Activated naive CD4-positive, alpha-beta T cell treated with anti-CD3 and anti-CD28 coated beads for 36 hours (primary cell): ENCODE measurements at regions of chr9 and their contacts with region 1.

Region 1: GRCh38 chr9:93028448-93029006 is 30.0 kb upstream of the SUSD3 start:
- DNase-seq: peak; percentile 90
- H3K4me3 Mint-ChIP-seq: peak overlapping the region; percentile 55
- H3K27ac Mint-ChIP-seq: peak overlapping the region; percentile 97
- H3K4me1 Mint-ChIP-seq: peaks cover 87% of the 10 kb centered on the region
- H3K27me3 Mint-ChIP-seq: no peaks in the 10 kb centered on the region

Region 2: DNA sequence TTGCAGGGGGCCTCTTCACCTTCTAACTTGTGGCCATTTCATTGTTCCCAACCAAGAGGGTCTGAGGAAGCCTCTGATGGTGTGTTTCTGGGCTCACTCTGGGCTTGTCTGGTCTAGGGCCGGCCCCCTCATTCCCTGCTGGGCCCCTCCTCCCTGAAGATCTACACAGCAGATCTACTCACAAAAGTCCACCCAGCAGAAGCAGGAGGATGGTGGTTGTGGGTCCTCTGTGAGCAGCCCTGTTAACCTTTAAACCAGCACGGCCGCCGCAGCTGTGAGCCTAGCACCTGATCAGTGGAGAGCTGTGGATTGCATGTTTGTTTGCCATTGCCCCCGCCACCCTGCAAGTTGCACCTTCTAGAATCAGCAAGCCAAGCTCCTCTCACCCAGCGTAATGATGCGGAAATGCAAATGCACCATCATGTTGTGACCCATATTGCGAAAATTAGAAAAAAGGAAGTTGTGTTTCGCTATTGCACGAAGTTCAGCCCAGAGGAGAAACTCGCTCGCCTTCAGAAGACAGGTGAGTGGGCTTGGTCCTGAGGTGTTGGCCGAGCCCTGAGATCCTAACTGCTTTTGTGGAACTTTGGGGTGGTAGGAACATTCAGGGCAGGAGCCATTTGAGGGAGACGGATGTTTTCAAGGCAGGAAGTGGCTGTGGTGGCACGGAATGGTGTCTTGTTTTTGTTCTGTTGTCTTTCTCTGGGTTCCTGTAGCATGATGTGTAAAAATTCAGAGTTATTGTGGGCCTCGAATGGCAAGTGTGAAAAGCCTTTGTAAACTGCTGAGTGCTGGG is 64.5 kb before region 1 on chr9:
- CTCF ChIA-PET with region 1: no interaction called
- intact Hi-C with region 1: loop called (anchors 1 kb)
- DNase-seq: peak; percentile 86
- H3K4me3 Mint-ChIP-seq: peak overlapping the region; percentile 99
- H3K27ac Mint-ChIP-seq: peak overlapping the region; percentile 100
- H3K4me1 Mint-ChIP-seq: peaks cover 56% of the 10 kb centered on the region
- H3K27me3 Mint-ChIP-seq: no peaks in the 10 kb centered on the region

Region 3: GRCh38 chr9:92986176-92987085 is 42.1 kb before region 1 on chr9:
- CTCF ChIA-PET with region 1: no interaction called
- intact Hi-C with region 1: loop called (anchors 1 kb)
- DNase-seq: peak; percentile 84
- H3K4me3 Mint-ChIP-seq: no peak overlapping the region
- H3K27ac Mint-ChIP-seq: peak overlapping the region; percentile 92
- H3K4me1 Mint-ChIP-seq: peaks cover 73% of the 10 kb centered on the region
- H3K27me3 Mint-ChIP-seq: no peaks in the 10 kb centered on the region

Region 4: DNA sequence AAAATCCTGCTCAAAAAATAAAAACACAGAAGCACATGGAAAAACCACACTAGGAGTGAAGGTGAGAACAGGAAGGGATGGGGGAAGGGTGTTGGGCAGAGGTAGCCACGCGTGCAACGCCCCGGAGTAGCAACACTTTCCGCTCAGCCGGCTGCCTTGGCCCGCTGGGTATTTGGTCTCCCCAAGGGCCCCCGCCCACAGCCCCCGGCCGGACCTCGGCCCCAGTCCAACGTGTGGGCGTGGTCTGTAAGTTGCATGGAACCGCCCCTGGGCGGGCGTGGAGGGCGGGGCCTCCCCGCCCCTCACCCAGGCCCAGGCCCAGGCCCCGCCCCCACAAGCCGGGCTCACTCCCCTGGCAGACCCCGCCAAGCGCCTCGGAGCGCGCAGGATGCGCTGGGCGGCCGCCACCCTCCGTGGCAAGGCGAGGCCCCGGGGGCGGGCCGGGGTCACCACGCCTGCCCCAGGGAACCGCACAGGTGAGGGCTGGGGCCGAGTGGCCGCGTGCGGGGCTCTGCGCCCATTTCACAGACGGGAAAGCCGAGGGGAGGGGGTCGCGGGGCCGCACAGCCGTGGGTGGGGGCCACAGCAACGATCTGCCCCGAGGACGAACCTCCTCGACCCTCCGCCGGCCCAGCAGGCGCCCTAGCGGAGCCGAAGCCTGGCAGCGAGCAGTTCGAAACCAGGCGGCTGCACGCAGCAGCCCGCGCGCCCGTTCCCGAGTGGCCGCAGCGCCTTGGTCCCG is 30.0 kb after region 1 on chr9 and contains the start of gene SUSD3:
- CTCF ChIA-PET with region 1: interaction called, 5 read pairs
- intact Hi-C with region 1: loop called (anchors 1 kb)
- DNase-seq: peak; percentile 66
- H3K4me3 Mint-ChIP-seq: peak within 1 kb of the TSS; percentile 93
- H3K27ac Mint-ChIP-seq: peak within 1 kb of the TSS; percentile 99
- H3K4me1 Mint-ChIP-seq: peaks cover 55% of the 10 kb centered on the region
- H3K27me3 Mint-ChIP-seq: no peaks in the 10 kb centered on the region
- total RNA-seq, gene SUSD3: 62.7 to 68.3 TPM

Region 5: GRCh38 chr9:93702269-93702668 is 673.7 kb after region 1 on chr9:
- CTCF ChIA-PET with region 1: no interaction called
- intact Hi-C with region 1: no loop called
- DNase-seq: no peak
- H3K4me3 Mint-ChIP-seq: no peak overlapping the region
- H3K27ac Mint-ChIP-seq: no peak overlapping the region
- H3K4me1 Mint-ChIP-seq: no peaks in the 10 kb centered on the region
- H3K27me3 Mint-ChIP-seq: peaks cover 3% of the 10 kb centered on the region